Activated CD4-positive, alpha-beta T cell treated with anti-CD3 and anti-CD28 coated beads for 36 hours (primary cell): ENCODE measurements at regions of chr1 and their contacts with region 1.

Region 1: GRCh38 chr1:109426278-109427170 is at the start of gene PSMA5:
- DNase-seq: peak; percentile 97
- ATAC-seq: peak; percentile 97
- H3K4me3 Mint-ChIP-seq: peak within 1 kb of the TSS; percentile 91
- H3K27ac Mint-ChIP-seq: peak within 1 kb of the TSS; percentile 96
- H3K4me1 Mint-ChIP-seq: peaks cover 34% of the 10 kb centered on the region
- H3K27me3 Mint-ChIP-seq: no peaks in the 10 kb centered on the region
- total RNA-seq, gene PSMA5: 151 to 249 TPM

Region 2: GRCh38 chr1:108963052-108963686 is 463.4 kb before region 1 on chr1 and contains the start of gene CLCC1:
- CTCF ChIA-PET with region 1: no interaction called
- POLR2A ChIA-PET with region 1: no interaction called
- intact Hi-C with region 1: loop called in 1 of 2 experiments (anchors 10 kb)
- DNase-seq: peak; percentile 96
- ATAC-seq: peak; percentile 97
- H3K4me3 Mint-ChIP-seq: peak within 1 kb of the TSS; percentile 81
- H3K27ac Mint-ChIP-seq: peak within 1 kb of the TSS; percentile 91
- H3K4me1 Mint-ChIP-seq: peaks cover 26% of the 10 kb centered on the region
- H3K27me3 Mint-ChIP-seq: no peaks in the 10 kb centered on the region
- total RNA-seq, gene CLCC1: 15.7 to 17.1 TPM

Region 3: DNA sequence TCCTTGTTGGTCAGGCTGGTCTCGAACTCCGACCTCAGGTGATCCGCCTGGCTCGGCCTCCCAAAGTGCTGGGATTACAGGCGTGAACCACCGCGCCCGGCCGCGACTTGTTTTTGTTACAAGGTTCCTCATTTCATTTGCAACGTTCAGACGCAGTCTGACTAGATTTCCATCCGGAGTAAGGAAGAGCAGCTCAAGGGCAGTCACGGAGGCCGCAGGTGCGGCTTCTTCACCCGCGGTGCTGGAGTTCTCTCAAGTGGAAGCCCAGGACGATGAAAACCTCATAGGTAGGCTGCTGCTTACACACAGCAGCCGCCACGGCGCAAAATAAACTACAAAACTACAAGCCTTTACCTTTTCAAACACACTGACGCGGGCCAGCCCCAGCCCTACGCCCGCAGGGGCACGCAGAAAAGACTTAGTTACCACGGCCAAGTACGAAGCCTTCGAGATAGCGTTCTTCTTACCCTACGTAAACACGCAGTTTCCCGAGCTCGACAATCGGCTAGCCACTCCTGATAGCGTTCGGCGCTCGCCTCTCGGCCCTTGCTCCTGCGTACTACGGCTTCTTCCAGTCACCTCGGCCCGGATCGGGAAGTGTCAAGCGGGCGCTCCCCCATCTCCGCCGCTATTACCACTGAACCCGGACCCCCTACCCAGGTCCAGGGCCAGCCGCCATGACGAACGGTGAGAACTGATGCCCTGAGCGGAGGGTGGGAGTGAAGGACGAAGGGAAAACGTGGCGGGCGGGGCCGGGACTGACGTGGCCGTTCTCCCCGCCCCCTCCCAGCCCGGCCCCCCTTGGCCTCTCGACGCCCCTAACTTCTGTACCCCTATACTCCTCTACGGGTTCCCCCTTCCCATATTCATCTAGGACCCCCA is 336.1 kb before region 1 on chr1 and contains the start of gene TMEM167B:
- CTCF ChIA-PET with region 1: no interaction called
- POLR2A ChIA-PET with region 1: no interaction called
- intact Hi-C with region 1: loop called (anchors 2 to 10 kb)
- DNase-seq: peak; percentile 95
- ATAC-seq: peak; percentile 88
- H3K4me3 Mint-ChIP-seq: peak within 1 kb of the TSS; percentile 85
- H3K27ac Mint-ChIP-seq: peak within 1 kb of the TSS; percentile 84
- H3K4me1 Mint-ChIP-seq: peaks cover 30% of the 10 kb centered on the region
- H3K27me3 Mint-ChIP-seq: no peaks in the 10 kb centered on the region
- total RNA-seq, gene TMEM167B: 26.8 to 28.4 TPM

Region 4: DNA sequence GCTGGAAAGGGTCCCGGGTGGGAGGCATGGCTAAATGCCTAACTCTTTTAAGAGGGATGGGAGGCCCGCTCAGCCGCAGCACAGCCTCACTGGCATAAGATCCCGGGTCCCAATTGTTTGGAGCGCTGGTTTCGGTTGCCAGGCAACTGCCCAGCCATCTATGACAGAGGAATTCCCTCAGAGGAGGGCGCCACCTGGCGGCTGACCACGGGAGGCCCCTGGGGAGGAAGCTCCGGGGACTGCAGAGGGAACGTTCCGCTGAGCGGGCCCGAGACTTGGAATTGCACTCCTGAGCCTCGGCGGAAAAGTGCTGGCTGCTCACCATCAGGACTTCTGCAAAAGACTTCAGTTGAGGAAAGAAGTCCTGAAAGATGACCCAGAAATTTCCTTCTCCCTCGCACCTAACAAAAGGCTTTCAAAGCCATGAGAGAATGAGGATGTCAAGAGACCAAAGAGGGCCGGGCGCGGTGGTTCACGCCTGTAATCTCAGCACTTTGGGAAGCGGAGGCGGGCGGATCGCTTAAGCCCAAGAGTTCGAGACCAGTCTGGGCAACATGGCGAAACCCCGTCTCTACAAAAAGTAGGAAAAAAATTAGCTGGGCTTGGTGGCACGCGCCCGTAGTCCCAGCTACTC is 313.8 kb before region 1 on chr1:
- CTCF ChIA-PET with region 1: interaction called, 4 read pairs
- POLR2A ChIA-PET with region 1: no interaction called
- intact Hi-C with region 1: loop called in 1 of 2 experiments (anchors 5 kb)
- DNase-seq: peak; percentile 95
- ATAC-seq: peak; percentile 62
- H3K4me3 Mint-ChIP-seq: peak overlapping the region; percentile 71
- H3K27ac Mint-ChIP-seq: peak overlapping the region; percentile 65
- H3K4me1 Mint-ChIP-seq: peaks cover 41% of the 10 kb centered on the region
- H3K27me3 Mint-ChIP-seq: no peaks in the 10 kb centered on the region

Region 5: DNA sequence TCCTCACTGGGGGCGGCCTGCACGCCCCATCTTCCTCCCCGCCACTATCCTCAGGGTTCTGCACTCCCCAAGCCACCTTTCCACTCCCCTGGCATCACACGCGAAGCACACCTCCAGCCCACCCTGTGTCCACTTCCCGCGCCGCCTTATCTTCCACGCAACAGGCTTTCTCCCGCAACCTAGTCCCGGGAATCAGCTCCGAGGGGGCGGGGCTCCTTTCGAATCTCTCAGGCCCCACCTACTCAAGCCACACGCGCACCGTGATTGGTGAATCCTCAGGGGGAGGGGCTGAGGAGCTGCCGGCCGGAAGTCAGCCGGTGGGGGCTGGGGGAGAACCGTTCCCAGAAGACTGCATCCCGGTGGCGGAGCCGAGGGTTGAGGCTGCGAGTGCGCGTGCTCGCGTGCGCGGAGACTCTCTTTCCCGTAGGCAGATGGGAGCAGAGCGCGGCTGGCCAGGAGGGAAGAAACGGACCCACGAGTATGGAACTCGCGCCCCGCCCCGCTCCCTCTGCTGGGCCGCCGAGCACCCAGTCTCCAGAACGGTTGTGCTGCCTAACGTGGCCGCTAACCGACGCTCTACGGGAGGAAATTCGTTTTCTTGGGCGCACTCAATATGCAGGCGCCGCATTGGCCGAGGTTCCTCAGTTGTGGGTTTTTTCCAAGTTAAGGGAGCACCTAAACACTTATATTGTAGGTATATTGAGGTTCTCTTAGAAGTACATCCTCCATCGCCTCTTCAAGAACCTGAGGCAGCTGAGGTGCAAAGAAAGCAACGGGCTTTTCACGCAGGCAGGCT is 143.4 kb before region 1 on chr1 and contains the start of gene PSRC1:
- CTCF ChIA-PET with region 1: interaction called, 5 read pairs
- POLR2A ChIA-PET with region 1: interaction called, 4 read pairs
- intact Hi-C with region 1: loop called in 1 of 2 experiments (anchors 1 kb)
- DNase-seq: peak; percentile 95
- ATAC-seq: peak; percentile 98
- H3K4me3 Mint-ChIP-seq: peak within 1 kb of the TSS; percentile 86
- H3K27ac Mint-ChIP-seq: peak within 1 kb of the TSS; percentile 90
- H3K4me1 Mint-ChIP-seq: peaks cover 11% of the 10 kb centered on the region
- H3K27me3 Mint-ChIP-seq: no peaks in the 10 kb centered on the region
- total RNA-seq, gene PSRC1: 17.6 to 18.4 TPM

Region 6: DNA sequence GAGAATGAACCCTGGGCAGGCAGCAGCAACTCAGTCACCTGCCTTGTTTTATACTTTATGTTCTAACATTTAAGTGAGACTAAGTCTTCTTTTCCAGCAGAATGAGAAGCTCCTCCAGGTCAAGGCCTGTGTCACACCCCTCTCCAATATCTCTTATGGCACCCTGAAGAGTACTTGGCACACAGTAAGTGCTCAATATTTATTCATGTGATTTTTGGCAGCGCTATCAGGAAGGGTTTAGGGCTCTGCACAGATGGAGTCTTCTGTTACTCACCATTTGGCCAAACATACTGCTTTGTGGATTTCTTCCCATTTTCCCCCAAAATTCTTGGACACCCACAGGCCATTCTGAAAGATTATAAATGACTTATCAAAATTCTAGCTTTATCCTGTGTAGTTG is 75.9 kb before region 1 on chr1:
- CTCF ChIA-PET with region 1: no interaction called
- POLR2A ChIA-PET with region 1: no interaction called
- intact Hi-C with region 1: no loop called
- DNase-seq: no peak
- ATAC-seq: no peak
- H3K4me3 Mint-ChIP-seq: no peak overlapping the region
- H3K27ac Mint-ChIP-seq: no peak overlapping the region
- H3K4me1 Mint-ChIP-seq: no peaks in the 10 kb centered on the region
- H3K27me3 Mint-ChIP-seq: peaks cover 2% of the 10 kb centered on the region

Region 7: DNA sequence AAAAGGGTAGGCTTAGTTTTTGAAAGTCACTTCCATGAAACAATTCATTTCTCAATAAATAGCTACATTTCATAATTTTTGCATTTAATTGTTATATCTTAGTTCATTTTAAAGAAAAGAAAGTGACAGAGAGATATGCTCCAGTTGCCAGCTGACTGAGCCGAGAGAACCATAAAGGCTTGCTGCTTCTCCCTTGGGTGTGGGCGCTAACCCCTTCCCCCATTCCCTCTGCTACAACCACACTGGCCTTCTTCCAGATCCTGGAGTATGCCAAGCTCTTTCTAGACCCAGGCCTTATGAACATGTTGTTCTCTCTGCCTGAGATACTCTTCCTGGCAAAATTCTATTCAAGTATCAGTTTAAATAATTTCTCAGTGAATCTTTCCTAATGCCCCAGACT is 41.1 kb before region 1 on chr1:
- CTCF ChIA-PET with region 1: no interaction called
- POLR2A ChIA-PET with region 1: no interaction called
- intact Hi-C with region 1: no loop called
- DNase-seq: no peak
- ATAC-seq: no peak
- H3K4me3 Mint-ChIP-seq: no peak overlapping the region
- H3K27ac Mint-ChIP-seq: no peak overlapping the region
- H3K4me1 Mint-ChIP-seq: peaks cover 3% of the 10 kb centered on the region
- H3K27me3 Mint-ChIP-seq: peaks cover 8% of the 10 kb centered on the region

Region 8: DNA sequence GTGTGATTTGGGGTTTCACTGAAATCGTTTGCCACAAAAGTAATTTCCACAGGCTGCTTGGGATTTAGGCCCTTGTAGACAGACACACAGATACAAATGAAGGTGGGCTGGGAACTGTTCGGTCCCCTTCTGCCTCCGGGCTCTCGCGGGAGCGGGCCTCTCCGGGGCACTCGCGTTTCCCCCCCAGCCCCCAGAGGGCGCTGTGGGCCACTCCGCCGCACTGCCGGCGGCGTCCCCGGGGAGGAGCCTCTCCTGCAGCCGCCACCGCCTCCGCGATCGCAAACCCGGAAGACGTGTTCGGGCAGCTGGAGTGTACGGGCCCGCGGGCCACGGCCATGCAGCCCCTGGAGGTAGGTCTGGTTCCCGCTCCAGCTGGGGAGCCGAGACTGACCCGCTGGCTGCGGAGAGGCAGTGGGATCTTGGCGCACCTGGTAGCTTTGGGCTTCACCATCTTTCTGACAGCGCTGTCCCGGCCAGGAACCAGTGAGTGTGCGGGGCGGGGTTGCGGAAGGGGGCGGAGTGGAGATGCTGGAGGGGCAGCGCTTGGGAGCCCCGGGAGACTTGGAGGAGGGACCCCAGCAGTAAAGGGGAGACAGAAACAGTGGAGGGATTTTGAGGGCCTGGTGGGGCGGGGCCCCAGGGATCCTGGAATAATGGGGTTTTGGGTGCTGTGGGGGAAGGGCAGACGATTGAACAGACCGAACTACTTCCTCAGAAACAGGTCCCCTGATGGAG is 67.4 kb after region 1 on chr1 and contains the start of gene CYB561D1:
- CTCF ChIA-PET with region 1: interaction called, 7 read pairs
- POLR2A ChIA-PET with region 1: interaction called, 4 read pairs
- intact Hi-C with region 1: loop called in 1 of 2 experiments (anchors 1 kb)
- DNase-seq: peak; percentile 95
- ATAC-seq: peak; percentile 89
- H3K4me3 Mint-ChIP-seq: peak within 1 kb of the TSS; percentile 98
- H3K27ac Mint-ChIP-seq: peak within 1 kb of the TSS; percentile 90
- H3K4me1 Mint-ChIP-seq: peaks cover 45% of the 10 kb centered on the region
- H3K27me3 Mint-ChIP-seq: no peaks in the 10 kb centered on the region
- total RNA-seq, gene CYB561D1: 7.1 to 8.7 TPM

Region 9: DNA sequence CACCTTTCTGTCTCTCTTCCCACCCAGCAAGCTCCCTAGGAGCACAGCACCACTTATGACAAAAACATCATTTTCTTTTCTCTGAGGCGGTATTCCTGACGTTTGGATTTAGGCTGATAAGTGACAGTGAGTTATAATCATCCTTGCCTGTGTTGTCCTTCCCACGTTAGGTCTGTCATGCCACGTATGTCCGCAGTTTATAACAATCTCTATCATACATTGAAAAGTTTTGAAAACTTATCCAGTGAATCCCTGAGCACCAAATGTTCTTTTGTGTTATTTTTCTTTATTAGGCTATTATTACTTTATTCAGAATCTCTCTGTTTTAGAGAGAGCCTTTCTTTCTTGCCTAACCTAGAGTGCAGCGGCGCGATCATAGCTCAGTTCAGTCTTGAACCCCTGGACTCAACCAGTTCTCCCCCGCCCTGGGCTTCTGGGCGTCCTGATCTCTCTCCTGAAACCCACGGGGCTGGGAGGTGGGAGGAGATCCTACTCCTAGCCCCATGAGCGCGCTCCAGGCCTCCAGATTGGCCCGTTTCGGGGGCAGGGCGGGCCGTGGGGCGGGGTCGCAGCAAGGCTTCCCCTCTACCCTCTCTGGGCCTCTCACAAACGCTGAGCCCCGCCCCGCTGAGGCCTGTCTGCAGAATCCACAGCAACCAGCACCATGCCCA is 241.1 kb after region 1 on chr1 and contains the start of gene GSTM2:
- CTCF ChIA-PET with region 1: no interaction called
- POLR2A ChIA-PET with region 1: no interaction called
- intact Hi-C with region 1: no loop called
- DNase-seq: peak; percentile 92
- ATAC-seq: peak; percentile 100
- H3K4me3 Mint-ChIP-seq: peak within 1 kb of the TSS; percentile 71
- H3K27ac Mint-ChIP-seq: no peak within 1 kb of the TSS
- H3K4me1 Mint-ChIP-seq: peaks cover 18% of the 10 kb centered on the region
- H3K27me3 Mint-ChIP-seq: no peaks in the 10 kb centered on the region
- total RNA-seq, gene GSTM2: 18.7 to 23.9 TPM

Region 10: GRCh38 chr1:110034451-110035235 is 608.1 kb after region 1 on chr1 and contains the start of gene STRIP1:
- CTCF ChIA-PET with region 1: interaction called, 4 read pairs
- POLR2A ChIA-PET with region 1: interaction called, 5 read pairs
- intact Hi-C with region 1: loop called in 1 of 2 experiments (anchors 5 kb)
- DNase-seq: peak; percentile 95
- ATAC-seq: peak; percentile 95
- H3K4me3 Mint-ChIP-seq: peak within 1 kb of the TSS; percentile 94
- H3K27ac Mint-ChIP-seq: peak within 1 kb of the TSS; percentile 95
- H3K4me1 Mint-ChIP-seq: peaks cover 47% of the 10 kb centered on the region
- H3K27me3 Mint-ChIP-seq: no peaks in the 10 kb centered on the region
- total RNA-seq, gene STRIP1: 20.7 to 21.5 TPM